HepG2 (cell line): ENCODE measurements at regions of chr10 and their contacts with region 1.

Region 1: DNA sequence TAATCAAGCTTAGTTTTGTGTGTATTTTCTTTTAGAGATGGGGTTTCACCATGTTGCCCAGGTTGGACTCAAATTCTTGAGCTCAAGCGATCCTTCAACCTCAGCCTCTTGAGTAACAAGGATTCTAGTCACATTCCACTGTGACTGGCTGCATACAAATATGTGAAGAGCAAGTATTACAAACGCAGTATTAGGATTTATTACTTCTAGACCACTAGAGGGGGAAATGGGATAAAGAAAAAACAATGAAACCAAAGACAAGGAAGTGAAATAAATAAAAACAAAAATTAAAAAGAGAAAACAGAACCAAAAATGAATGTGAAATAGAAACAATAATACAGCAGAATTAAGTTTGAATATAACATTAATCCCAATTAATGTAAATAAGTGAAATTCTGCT is 308.7 kb downstream of the ANKRD30A start:
- DNase-seq: no peak
- ATAC-seq: peak; percentile 54; the same call in 1 of the 3 replicates
- H3K4me3 ChIP-seq: no peak overlapping the region
- H3K27ac ChIP-seq: no peak overlapping the region
- H3K4me1 ChIP-seq: no peaks in the 10 kb centered on the region
- H3K27me3 ChIP-seq: no peaks in the 10 kb centered on the region
- CTCF ChIP-seq: peak; percentile 14; the same call in 1 of the 2 replicates
- EP300 ChIP-seq: no peak
- POLR2A ChIP-seq: no peak
- RAD21 ChIP-seq: no peak

Region 2: GRCh38 chr10:37495415-37495814 is 61.3 kb after region 1 on chr10:
- CTCF ChIA-PET with region 1: no interaction called
- POLR2A ChIA-PET with region 1: no interaction called
- in situ Hi-C with region 1: no loop called
- intact Hi-C with region 1: loop called (anchors 2 kb)
- DNase-seq: no peak
- ATAC-seq: peak; percentile 56; the same call in 2 of the 3 replicates
- H3K4me3 ChIP-seq: no peak overlapping the region
- H3K27ac ChIP-seq: no peak overlapping the region
- H3K4me1 ChIP-seq: no peaks in the 10 kb centered on the region
- H3K27me3 ChIP-seq: no peaks in the 10 kb centered on the region
- CTCF ChIP-seq: peak; percentile 40
- EP300 ChIP-seq: no peak
- POLR2A ChIP-seq: no peak
- RAD21 ChIP-seq: no peak

Region 3: GRCh38 chr10:37566331-37566730 is 132.2 kb after region 1 on chr10:
- CTCF ChIA-PET with region 1: no interaction called
- POLR2A ChIA-PET with region 1: no interaction called
- in situ Hi-C with region 1: no loop called
- intact Hi-C with region 1: no loop called
- DNase-seq: no peak
- ATAC-seq: no peak
- H3K4me3 ChIP-seq: no peak overlapping the region
- H3K27ac ChIP-seq: no peak overlapping the region
- H3K4me1 ChIP-seq: no peaks in the 10 kb centered on the region
- H3K27me3 ChIP-seq: no peaks in the 10 kb centered on the region
- CTCF ChIP-seq: no peak
- EP300 ChIP-seq: no peak
- POLR2A ChIP-seq: no peak
- RAD21 ChIP-seq: no peak